ENCODE measurements at regions of chr5 and their contacts with region 1.

Region 1: DNA sequence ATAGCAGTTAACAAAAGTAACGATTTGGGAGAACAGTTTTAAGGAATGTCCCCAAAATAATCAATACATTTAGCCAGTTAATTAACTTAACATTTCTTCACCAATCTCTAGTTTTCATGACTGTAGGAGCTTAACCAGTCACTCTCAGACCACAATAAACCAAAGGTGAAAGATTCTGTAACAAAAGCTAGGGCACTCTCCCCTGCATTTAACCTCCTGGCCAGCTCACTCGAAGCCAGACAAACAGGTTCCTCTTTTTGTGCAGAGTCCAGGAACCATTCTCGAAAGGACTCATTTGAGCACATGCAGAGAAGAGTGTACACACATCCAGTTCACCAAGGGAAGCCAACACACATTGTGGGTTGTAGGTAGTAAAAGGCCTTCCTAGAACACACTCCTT is 6.5 kb downstream of the IL7R start:
- DNase-seq: peak; percentile 45
- ATAC-seq: peak; percentile 52
- H3K4me3 Mint-ChIP-seq: peak overlapping the region; percentile 95
- H3K27ac Mint-ChIP-seq: peak overlapping the region; percentile 97
- H3K4me1 Mint-ChIP-seq: peaks cover 80% of the 10 kb centered on the region
- H3K27me3 Mint-ChIP-seq: no peaks in the 10 kb centered on the region
- CTCF ChIP-seq: no peak

Region 2: GRCh38 chr5:35876921-35877320 is 13.8 kb after region 1 on chr5:
- CTCF ChIA-PET with region 1: interaction called, 11 read pairs
- POLR2A ChIA-PET with region 1: interaction called, 10 read pairs
- intact Hi-C with region 1: no loop called
- DNase-seq: no peak
- ATAC-seq: peak; percentile 45
- H3K4me3 Mint-ChIP-seq: no peak overlapping the region
- H3K27ac Mint-ChIP-seq: peak overlapping the region; percentile 78
- H3K4me1 Mint-ChIP-seq: peaks cover 80% of the 10 kb centered on the region
- H3K27me3 Mint-ChIP-seq: no peaks in the 10 kb centered on the region
- CTCF ChIP-seq: no peak

Region 3: GRCh38 chr5:36241631-36242533 is 378.7 kb after region 1 on chr5 and contains the start of gene NADK2:
- CTCF ChIA-PET with region 1: no interaction called
- POLR2A ChIA-PET with region 1: no interaction called
- intact Hi-C with region 1: no loop called
- DNase-seq: peak; percentile 95
- ATAC-seq: peak; percentile 93
- H3K4me3 Mint-ChIP-seq: peak within 1 kb of the TSS; percentile 78
- H3K27ac Mint-ChIP-seq: peak within 1 kb of the TSS; percentile 98
- H3K4me1 Mint-ChIP-seq: peaks cover 39% of the 10 kb centered on the region
- H3K27me3 Mint-ChIP-seq: no peaks in the 10 kb centered on the region
- CTCF ChIP-seq: peak; percentile 48
- total RNA-seq, gene NADK2: 22.7 to 25.2 TPM

Region 4: GRCh38 chr5:36272136-36272690 is 409.1 kb after region 1 on chr5:
- CTCF ChIA-PET with region 1: no interaction called
- POLR2A ChIA-PET with region 1: no interaction called
- intact Hi-C with region 1: no loop called
- DNase-seq: no peak
- ATAC-seq: no peak
- H3K4me3 Mint-ChIP-seq: no peak overlapping the region
- H3K27ac Mint-ChIP-seq: no peak overlapping the region
- H3K4me1 Mint-ChIP-seq: no peaks in the 10 kb centered on the region
- H3K27me3 Mint-ChIP-seq: peaks cover 8% of the 10 kb centered on the region
- CTCF ChIP-seq: no peak

Region 5: GRCh38 chr5:36561601-36562000 is 698.4 kb after region 1 on chr5:
- CTCF ChIA-PET with region 1: no interaction called
- POLR2A ChIA-PET with region 1: no interaction called
- intact Hi-C with region 1: no loop called
- DNase-seq: no peak
- ATAC-seq: no peak
- H3K4me3 Mint-ChIP-seq: no peak overlapping the region
- H3K27ac Mint-ChIP-seq: no peak overlapping the region
- H3K4me1 Mint-ChIP-seq: no peaks in the 10 kb centered on the region
- H3K27me3 Mint-ChIP-seq: no peaks in the 10 kb centered on the region
- CTCF ChIP-seq: no peak